Dorsolateral prefrontal cortex (tissue), 120 donors: ENCODE measurements at regions of chr2 and their contacts with region 1.

Region 1: GRCh38 chr2:225112362-225113126 is 70.3 kb upstream of the DOCK10 start:
- DNase-seq: no peak
- H3K4me3 ChIP-seq: peak overlapping the region in 22 of 59 donors; percentile 1 to 37 (median 18)
- H3K27ac ChIP-seq: peak overlapping the region; percentile 23 to 97 (median 90)
- H3K27me3 ChIP-seq: peaks cover 0 to 4% (median 0%) of the 10 kb centered on the region in 45 donors
- CTCF ChIP-seq: peak in 3 of 56 donors; percentile 9 to 14 (median 14)

Region 2: GRCh38 chr2:224982910-224983711 is 129.4 kb before region 1 on chr2:
- intact Hi-C with region 1: loop called in 1 of 2 experiments (anchors 2 kb)
- DNase-seq: peak in 1 of 10 donors; percentile 22
- H3K4me3 ChIP-seq: peak overlapping the region; percentile 8 to 71 (median 47)
- H3K27ac ChIP-seq: peak overlapping the region; percentile 33 to 93 (median 86)
- H3K27me3 ChIP-seq: peaks cover 0 to 5% (median 0%) of the 10 kb centered on the region in 45 donors
- CTCF ChIP-seq: peak in 1 of 56 donors; percentile 15

Region 3: DNA sequence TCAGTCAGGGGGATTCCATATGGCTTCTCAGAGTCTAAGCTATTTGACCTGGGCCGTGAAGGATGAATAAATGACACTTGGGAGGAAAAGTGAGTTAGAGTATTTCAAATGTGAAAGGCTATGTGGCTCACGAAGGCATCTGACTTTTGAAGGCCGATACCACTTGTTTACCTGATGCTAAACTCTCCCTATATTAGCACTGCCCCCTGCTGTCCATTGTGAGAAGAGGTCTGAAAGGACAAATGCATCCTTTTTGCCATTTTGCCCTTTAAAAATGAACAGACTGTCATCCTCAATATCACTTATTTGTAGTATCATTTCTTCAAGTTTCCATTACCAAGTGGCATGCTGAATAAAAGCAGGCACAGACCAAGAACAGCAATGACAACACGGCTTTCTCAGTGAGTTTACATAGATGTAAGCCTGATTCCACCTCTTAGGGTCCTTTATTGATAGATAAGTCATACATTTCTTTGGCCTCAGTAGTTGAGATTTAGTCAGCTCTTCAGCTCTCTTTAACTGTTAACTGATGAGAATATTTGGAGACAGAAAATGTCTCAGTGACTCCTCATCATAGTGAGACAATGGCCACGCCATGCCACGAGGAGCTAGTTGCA is 110.4 kb before region 1 on chr2:
- intact Hi-C with region 1: loop called in 1 of 2 experiments (anchors 10 kb)
- DNase-seq: peak in 1 of 10 donors; percentile 61
- H3K4me3 ChIP-seq: no peak overlapping the region
- H3K27ac ChIP-seq: peak overlapping the region in 42 of 59 donors; percentile 2 to 82 (median 56)
- H3K27me3 ChIP-seq: peaks cover 0 to 2% (median 0%) of the 10 kb centered on the region in 45 donors
- CTCF ChIP-seq: peak; percentile 47 to 87 (median 80)

Region 4: DNA sequence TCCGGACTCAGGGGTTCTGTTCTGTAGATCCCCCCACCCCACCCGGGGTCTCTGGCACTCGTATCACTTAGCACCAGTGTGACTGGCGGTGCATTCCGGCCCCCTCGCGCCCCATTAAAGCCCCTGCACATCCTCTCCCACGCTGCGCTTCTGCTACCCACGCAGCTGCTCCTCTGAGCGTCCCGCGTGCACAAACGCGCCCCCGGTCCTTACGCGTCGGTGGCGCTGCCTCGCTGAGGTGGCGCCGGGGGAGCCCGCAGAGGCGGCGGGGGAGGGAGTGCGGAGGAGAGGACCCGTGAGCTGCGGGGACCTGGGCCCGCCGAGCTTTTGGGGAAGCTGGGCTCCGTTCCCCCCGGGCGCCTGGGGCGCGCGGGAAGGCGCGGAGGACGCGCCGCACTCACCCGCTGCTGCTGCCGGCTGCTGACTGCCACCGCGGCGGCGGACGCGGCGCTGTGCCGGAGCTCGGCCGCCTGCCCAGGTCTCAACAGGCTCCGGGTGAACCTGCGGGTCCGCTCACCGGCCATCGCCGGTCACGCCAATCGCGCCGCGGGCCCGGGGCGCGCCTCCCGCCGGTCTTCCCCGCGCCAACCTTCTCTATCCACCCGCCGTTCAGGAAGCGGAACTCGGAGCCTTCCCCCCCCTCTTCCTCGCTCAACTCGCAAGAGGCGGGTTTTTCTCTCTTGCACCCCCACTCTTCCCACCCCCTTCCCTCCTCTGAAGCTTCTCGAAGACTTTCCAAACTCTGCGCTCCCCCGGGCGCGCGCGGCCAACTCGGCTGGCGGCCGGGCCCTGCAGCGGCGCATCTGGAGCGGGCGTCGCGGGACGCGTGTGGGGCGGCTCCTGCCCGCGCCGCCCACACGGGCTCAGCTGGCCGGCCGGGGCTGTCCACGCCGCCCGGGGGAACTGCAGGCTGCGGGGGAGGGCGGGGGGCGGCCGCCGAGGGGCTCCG is 70.4 kb before region 1 on chr2 and contains the start of gene DOCK10:
- intact Hi-C with region 1: loop called (anchors 1 kb)
- DNase-seq: peak in 8 of 10 donors; percentile 27 to 78 (median 54)
- H3K4me3 ChIP-seq: peak within 1 kb of the TSS; percentile 52 to 87 (median 74)
- H3K27ac ChIP-seq: peak within 1 kb of the TSS; percentile 33 to 98 (median 93)
- H3K27me3 ChIP-seq: peaks cover 0 to 30% (median 5%) of the 10 kb centered on the region in 45 donors
- CTCF ChIP-seq: peak in 15 of 56 donors; percentile 7 to 39 (median 15)
- total RNA-seq, gene DOCK10: 24.3 to 264 (median 89.2) TPM

Region 5: GRCh38 chr2:225074366-225074765 is 38.2 kb before region 1 on chr2:
- intact Hi-C with region 1: loop called (anchors 2 to 5 kb)
- DNase-seq: no peak
- H3K4me3 ChIP-seq: no peak overlapping the region
- H3K27ac ChIP-seq: no peak overlapping the region
- H3K27me3 ChIP-seq: no peaks in the 10 kb centered on the region
- CTCF ChIP-seq: no peak

Region 6: GRCh38 chr2:225660262-225661131 is 548.0 kb after region 1 on chr2:
- intact Hi-C with region 1: loop called in 1 of 2 experiments (anchors 5 kb)
- DNase-seq: peak; percentile 73 to 92 (median 80)
- H3K4me3 ChIP-seq: no peak overlapping the region
- H3K27ac ChIP-seq: no peak overlapping the region
- H3K27me3 ChIP-seq: no peaks in the 10 kb centered on the region
- CTCF ChIP-seq: peak; percentile 77 to 97 (median 90)